Tibial artery (tissue), 4 donors: ENCODE measurements at regions of chr3 and their contacts with region 1.

Region 1: GRCh38 chr3:16060358-16060852 is 114.1 kb upstream of the GALNT15 start:
- DNase-seq: peak; percentile 87 to 89
- H3K4me3 ChIP-seq: no peak overlapping the region
- H3K27ac ChIP-seq: peak overlapping the region; percentile 60 to 81
- H3K4me1 ChIP-seq: peaks cover 0 to 74% (median 50%) of the 10 kb centered on the region in 4 donors
- H3K27me3 ChIP-seq: no peaks in the 10 kb centered on the region
- CTCF ChIP-seq: peak in 1 of 2 experiments; percentile 44

Region 2: DNA sequence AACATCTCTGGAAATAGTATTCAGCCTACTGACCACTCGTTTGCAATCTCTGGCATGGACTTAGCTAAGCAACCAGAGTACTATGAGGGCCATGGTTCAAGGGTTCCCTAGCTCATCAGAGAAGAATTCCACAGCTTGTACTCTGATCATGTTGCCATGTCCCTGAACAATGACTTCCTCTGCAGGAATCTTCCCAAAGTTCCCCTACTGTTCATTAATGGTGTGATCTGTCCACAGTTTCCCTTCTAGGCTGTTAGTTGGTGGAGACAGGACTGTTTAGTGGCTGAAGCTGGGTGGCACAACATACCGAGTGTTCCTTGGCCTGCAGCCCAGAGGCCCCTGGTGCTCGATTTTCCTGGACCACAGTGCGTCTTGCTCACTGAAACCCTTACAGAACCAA is 69.7 kb after region 1 on chr3:
- intact Hi-C with region 1: loop called (anchors 10 kb)
- DNase-seq: peak in 1 of 2 donors; percentile 82
- H3K4me3 ChIP-seq: no peak overlapping the region
- H3K27ac ChIP-seq: peak overlapping the region; percentile 54 to 68
- H3K4me1 ChIP-seq: peaks cover 0 to 55% (median 38%) of the 10 kb centered on the region in 4 donors
- H3K27me3 ChIP-seq: no peaks in the 10 kb centered on the region
- CTCF ChIP-seq: no peak